ENCODE measurements at regions of chr1 and their contacts with region 1.

Region 1: DNA sequence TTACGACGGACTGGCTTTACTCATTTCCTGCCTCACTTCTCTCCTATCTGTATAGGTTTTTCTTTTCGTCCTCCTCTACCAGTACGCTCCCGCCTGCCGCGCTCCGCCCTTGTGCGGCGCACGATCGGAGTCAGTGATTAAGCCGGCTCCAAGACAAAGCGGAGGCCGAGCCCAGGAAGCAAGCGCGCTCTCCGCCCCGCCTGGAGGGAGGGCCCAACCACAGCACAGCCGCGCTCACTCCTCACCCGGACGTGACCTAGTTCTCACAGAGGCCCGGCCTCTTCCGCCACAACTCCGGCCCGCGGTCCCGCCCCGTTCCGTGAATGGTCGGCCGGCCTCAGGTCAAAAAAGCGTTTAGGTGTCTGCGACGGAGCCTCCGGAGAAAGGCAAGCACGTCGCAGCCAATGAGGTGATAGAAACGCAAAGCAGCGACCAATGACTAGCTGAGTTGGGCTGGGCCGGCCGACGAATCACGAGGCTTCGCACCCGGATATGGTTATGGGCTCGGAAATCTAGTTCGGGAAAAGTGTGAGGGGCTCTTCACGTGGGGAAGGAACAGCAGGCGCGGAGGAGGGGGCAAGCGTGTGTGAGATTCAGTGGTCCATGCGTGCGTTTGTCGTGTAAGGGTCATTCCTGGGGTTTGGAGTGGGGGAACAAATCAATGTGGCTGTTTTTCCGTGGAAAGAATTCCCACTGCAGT is at the start of gene METTL13:
- DNase-seq: peak; percentile 91
- ATAC-seq: peak; percentile 94
- H3K4me3 Mint-ChIP-seq: peak within 1 kb of the TSS; percentile 99
- H3K27ac Mint-ChIP-seq: peak within 1 kb of the TSS; percentile 94
- H3K4me1 Mint-ChIP-seq: peaks cover 43% of the 10 kb centered on the region
- H3K27me3 Mint-ChIP-seq: peaks cover 6% of the 10 kb centered on the region
- CTCF ChIP-seq: no peak
- total RNA-seq, gene METTL13: 33.6 and 35.7 TPM in 2 replicates

Region 2: DNA sequence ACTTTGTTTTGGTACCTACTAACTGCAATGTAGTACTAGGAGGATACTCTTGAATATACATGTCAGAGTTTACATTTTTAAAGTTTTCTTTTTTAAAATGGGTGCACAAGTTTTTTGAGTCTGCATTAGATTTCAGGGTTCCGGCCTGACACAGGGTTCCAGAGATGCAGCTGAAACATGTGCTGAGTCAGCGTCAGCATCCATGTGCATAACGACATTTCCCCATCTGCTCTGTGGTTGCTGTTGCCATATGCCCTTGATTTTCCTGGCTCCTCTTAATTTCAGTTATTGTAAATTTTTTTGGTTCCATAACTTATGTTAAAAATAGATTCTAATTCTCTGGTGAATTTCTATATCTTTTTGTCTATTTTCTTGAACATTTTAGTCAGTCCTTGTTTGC is 12.2 kb before region 1 on chr1:
- CTCF ChIA-PET with region 1: no interaction called
- POLR2A ChIA-PET with region 1: no interaction called
- intact Hi-C with region 1: no loop called
- DNase-seq: no peak
- ATAC-seq: no peak
- H3K4me3 Mint-ChIP-seq: no peak overlapping the region
- H3K27ac Mint-ChIP-seq: no peak overlapping the region
- H3K4me1 Mint-ChIP-seq: peaks cover 8% of the 10 kb centered on the region
- H3K27me3 Mint-ChIP-seq: peaks cover 5% of the 10 kb centered on the region
- CTCF ChIP-seq: no peak

Region 3: GRCh38 chr1:171841050-171841940 is 60.0 kb after region 1 on chr1 and contains the start of gene DNM3:
- CTCF ChIA-PET with region 1: no interaction called
- POLR2A ChIA-PET with region 1: no interaction called
- intact Hi-C with region 1: loop called (anchors 1 kb)
- DNase-seq: peak; percentile 91
- ATAC-seq: peak; percentile 94
- H3K4me3 Mint-ChIP-seq: peak within 1 kb of the TSS; percentile 85
- H3K27ac Mint-ChIP-seq: peak within 1 kb of the TSS; percentile 36
- H3K4me1 Mint-ChIP-seq: peaks cover 18% of the 10 kb centered on the region
- H3K27me3 Mint-ChIP-seq: peaks cover 20% of the 10 kb centered on the region
- CTCF ChIP-seq: no peak
- total RNA-seq, gene DNM3: 1.9 and 2.1 TPM in 2 replicates

Region 4: DNA sequence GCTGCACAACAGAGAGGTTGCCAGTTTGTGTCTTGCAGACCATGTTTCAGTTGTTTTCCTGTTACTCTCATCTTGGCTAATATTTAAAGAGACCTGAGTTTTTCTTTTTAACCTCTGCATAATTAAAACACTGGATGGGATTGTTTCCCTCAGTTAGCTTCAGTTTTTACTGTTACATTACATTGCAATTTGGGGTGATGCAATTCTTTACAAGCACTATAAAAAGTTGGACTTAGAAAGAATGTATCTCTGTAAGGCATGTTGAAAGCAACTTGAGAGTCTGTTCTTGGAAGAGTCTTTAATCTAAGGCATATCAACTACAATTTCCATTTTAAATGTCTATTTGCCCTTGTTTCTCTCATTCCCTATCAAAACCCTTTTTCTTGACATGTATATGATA is 159.0 kb after region 1 on chr1:
- CTCF ChIA-PET with region 1: no interaction called
- POLR2A ChIA-PET with region 1: no interaction called
- intact Hi-C with region 1: no loop called
- DNase-seq: no peak
- ATAC-seq: no peak
- H3K4me3 Mint-ChIP-seq: no peak overlapping the region
- H3K27ac Mint-ChIP-seq: no peak overlapping the region
- H3K4me1 Mint-ChIP-seq: no peaks in the 10 kb centered on the region
- H3K27me3 Mint-ChIP-seq: no peaks in the 10 kb centered on the region
- CTCF ChIP-seq: no peak